ENCODE measurements at regions of chr3 and their contacts with region 1.

Region 1: GRCh38 chr3:45507820-45508317 is 86.7 kb upstream of the LIMD1 start:
- DNase-seq: no peak
- H3K4me3 Mint-ChIP-seq: no peak overlapping the region
- H3K27ac Mint-ChIP-seq: no peak overlapping the region
- H3K4me1 Mint-ChIP-seq: peaks cover 7% of the 10 kb centered on the region
- H3K27me3 Mint-ChIP-seq: no peaks in the 10 kb centered on the region

Region 2: DNA sequence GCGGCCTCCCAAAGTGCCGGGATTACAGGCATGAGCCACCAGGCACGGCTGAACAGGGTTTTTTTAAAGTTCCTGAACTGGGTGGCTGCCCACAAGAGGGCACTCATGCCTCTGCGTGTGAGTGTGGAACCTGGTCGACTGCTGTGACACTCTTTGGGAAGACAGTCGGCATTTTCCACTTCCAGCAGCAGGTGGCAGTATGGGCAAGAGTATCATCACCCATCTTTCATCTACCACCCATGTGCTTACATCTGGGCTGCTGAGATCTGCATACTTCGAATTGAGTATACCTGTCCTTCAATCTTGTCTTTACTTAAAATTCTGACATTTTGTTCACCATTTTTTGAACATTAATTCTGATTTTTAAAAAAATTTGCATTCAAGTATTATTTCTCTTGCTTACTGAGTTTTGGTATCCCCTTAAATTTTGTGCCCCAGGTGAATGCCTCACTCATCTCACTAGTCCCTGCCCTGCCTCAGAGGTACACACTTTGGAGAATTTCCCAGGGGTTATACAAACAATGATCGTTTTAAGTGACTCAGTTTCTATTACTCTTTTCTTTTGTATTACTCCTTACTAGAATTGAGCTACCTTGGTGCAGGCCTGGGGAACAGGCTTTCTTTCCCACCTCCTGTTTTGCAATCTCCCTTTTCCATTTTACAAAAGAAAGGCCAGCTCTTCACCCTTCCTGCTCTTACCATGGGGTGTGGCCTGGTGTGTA is 470.0 kb before region 1 on chr3:
- intact Hi-C with region 1: loop called (anchors 2 kb)
- DNase-seq: peak; percentile 97
- H3K4me3 Mint-ChIP-seq: peak overlapping the region; percentile 34
- H3K27ac Mint-ChIP-seq: no peak overlapping the region
- H3K4me1 Mint-ChIP-seq: peaks cover 45% of the 10 kb centered on the region
- H3K27me3 Mint-ChIP-seq: peaks cover 28% of the 10 kb centered on the region

Region 3: DNA sequence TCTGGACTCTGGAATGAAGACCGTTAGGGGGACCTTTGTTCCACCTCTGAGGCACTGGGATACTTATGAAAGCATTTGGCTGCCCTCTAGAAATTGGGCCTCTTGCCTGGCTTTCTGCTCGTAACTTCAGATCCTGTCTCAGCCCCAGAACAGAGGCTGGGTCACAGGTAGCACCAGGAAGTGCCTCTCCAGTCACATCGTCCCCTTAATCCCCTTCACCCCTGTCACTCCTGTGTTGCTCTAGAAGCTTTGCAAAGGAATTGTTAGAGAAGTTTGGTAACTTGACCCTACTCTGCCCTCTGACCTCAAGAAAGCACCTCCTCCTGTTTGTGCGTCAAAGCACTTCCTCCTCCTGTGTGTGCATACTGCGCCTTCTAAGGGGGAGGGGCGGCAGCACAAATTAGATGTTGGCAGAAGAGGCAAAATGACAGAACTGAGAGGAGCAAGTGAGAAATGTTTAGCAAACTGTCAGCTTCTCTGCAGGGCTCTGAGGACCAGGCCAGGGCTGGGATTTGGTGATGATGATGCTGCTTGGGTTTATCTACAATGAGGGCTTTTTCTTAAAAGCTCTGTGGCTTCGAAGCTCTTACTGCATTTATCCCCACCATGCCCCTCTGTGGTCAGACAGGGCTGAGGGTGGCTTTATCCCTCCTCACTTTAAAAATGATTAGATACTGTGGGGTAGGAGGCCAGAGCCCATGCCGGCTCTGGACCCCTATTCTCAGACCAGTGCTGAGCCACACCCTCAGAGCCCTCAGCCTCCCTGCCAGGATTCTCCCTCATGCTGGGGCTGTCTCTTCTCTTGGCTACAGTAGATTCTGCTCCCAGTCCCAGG is 43.3 kb before region 1 on chr3:
- intact Hi-C with region 1: loop called (anchors 5 kb)
- DNase-seq: peak; percentile 76
- H3K4me3 Mint-ChIP-seq: no peak overlapping the region
- H3K27ac Mint-ChIP-seq: no peak overlapping the region
- H3K4me1 Mint-ChIP-seq: peaks cover 34% of the 10 kb centered on the region
- H3K27me3 Mint-ChIP-seq: no peaks in the 10 kb centered on the region

Region 4: DNA sequence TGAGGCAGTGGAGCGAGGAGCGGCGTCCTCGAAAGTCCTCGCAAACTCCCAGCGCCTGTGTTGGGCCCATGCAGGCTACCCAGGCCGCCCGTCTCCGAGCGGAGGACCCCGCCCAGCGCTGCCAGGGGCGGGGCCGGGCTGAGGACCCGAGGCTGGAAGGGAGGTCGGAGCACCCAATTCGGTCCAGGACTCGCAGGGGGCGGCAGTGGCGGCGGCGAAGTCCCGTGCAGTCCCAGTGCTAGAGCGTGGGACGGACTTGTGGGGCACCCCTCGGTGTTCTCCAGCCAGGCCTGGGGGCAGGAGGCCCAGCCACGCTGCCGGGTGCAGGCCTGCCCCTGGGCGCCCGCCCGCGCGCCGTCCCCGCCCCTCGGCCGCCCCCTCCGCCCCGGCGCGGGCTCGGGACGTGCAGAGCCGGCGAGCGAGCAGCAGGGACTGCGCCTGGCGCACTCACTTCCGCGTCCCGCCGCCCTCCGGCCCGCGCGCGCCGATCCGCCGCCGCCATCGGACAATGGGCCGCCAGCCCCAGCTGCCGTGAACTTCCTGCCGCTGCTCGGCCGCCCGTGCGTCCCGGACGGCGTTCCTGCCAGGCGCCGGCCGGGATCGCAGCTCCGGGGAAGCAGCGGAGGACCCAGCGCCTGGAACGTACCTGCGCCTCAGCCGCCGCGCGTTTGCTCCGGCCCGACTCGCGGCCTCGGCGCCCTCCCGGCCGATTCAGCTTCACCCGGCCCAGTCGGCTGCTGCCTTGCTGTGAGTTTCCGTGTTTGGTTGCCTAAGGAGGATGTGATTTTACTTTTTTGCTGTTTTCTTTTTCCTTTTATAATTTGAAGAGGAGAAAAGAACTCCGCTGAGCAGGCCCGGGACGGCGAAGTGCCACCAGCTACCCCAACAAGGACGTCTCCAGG is 86.1 kb after region 1 on chr3:
- intact Hi-C with region 1: loop called (anchors 5 kb)
- DNase-seq: peak; percentile 94
- H3K4me3 Mint-ChIP-seq: peak overlapping the region; percentile 83
- H3K27ac Mint-ChIP-seq: peak overlapping the region; percentile 90
- H3K4me1 Mint-ChIP-seq: peaks cover 48% of the 10 kb centered on the region
- H3K27me3 Mint-ChIP-seq: peaks cover 3% of the 10 kb centered on the region

Region 5: GRCh38 chr3:45635477-45636256 is 127.8 kb after region 1 on chr3:
- intact Hi-C with region 1: no loop called
- DNase-seq: no peak
- H3K4me3 Mint-ChIP-seq: no peak overlapping the region
- H3K27ac Mint-ChIP-seq: no peak overlapping the region
- H3K4me1 Mint-ChIP-seq: peaks cover 25% of the 10 kb centered on the region
- H3K27me3 Mint-ChIP-seq: no peaks in the 10 kb centered on the region

Region 6: DNA sequence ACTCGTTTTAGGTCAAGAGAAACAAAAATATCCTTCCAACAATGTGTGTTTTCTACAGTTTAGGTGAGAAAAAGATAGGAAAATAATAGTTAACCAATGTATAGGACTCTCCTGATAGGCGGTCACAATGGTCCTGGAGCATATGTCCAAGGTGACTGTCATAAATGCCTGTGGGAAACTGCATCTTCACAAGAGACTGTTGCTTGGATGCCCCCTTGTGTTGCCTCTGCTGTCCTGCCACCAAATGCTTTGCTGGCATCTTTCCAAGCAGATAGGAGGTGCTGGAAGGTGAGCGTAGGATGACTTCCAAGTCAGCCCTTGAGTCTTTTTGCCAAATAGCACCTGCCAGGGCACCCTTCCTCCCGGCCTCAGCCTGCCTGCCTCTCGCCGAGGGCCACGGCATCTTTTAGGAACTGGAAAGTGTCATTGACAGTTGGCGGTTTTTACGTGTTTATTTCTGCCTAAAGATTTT is 157.3 kb after region 1 on chr3:
- intact Hi-C with region 1: loop called (anchors 1 kb)
- DNase-seq: peak; percentile 86
- H3K4me3 Mint-ChIP-seq: peak overlapping the region; percentile 76
- H3K27ac Mint-ChIP-seq: peak overlapping the region; percentile 88
- H3K4me1 Mint-ChIP-seq: peaks cover 49% of the 10 kb centered on the region
- H3K27me3 Mint-ChIP-seq: no peaks in the 10 kb centered on the region

Region 7: GRCh38 chr3:46078712-46079400 is 571.0 kb after region 1 on chr3:
- intact Hi-C with region 1: loop called (anchors 5 kb)
- DNase-seq: peak; percentile 97
- H3K4me3 Mint-ChIP-seq: peak overlapping the region; percentile 51
- H3K27ac Mint-ChIP-seq: no peak overlapping the region
- H3K4me1 Mint-ChIP-seq: peaks cover 35% of the 10 kb centered on the region
- H3K27me3 Mint-ChIP-seq: peaks cover 18% of the 10 kb centered on the region